Naive thymus-derived CD4-positive, alpha-beta T cell (primary cell): ENCODE measurements at regions of chr9 and their contacts with region 1.

Region 1: DNA sequence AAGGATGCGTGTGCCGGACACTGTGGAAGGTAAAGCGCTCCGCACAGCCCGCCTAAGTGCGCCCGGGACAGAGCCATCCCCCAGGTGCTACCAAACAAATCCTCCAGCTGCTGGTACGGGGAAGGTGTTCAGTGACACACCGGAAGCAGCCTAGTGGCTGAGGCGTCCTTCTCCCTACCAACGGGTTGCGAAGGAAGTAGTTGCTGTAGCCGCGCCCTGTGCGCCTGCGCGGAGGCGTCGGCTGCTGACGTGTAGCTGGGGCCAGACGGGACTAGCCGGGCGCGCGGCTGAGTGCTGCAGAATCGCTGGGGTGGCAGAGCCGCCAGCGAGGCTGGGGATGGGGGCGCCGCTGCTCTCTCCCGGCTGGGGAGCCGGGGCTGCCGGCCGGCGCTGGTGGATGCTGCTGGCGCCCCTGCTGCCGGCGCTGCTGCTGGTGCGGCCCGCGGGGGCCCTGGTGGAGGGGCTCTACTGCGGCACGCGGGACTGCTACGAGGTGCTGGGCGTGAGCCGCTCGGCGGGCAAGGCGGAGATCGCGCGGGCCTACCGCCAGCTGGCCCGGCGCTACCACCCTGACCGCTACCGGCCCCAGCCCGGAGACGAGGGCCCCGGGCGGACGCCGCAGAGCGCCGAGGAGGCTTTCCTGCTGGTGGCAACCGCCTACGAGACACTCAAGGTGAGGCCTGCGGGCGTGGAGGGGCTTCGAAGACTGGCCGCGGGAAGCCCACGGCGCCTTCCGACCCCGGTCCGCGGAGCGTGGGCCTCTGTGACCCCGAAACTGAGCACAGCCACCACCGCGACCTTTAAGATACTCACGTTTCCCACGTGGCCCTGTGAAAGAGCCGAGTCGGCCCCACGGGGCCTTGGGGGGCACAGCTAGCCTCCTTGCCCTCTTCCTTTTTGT is at the start of gene DNAJC25:
- DNase-seq: peak; percentile 94 to 98 (median 97)
- ATAC-seq: peak; percentile 97
- H3K4me3 ChIP-seq: peak within 1 kb of the TSS; percentile 82
- H3K4me3 Mint-ChIP-seq: peak within 1 kb of the TSS; percentile 81 to 99 (median 94)
- H3K27ac ChIP-seq: peak within 1 kb of the TSS; percentile 83
- H3K27ac Mint-ChIP-seq: peak within 1 kb of the TSS; percentile 78 to 95 (median 89)
- H3K4me1 ChIP-seq: peaks cover 14 to 21% of the 10 kb centered on the region in 2 donors
- H3K4me1 Mint-ChIP-seq: peaks cover 29 to 57% (median 47%) of the 10 kb centered on the region in 7 donors
- H3K27me3 ChIP-seq: no peaks in the 10 kb centered on the region
- H3K27me3 Mint-ChIP-seq: no peaks in the 10 kb centered on the region
- total RNA-seq, gene DNAJC25: 4.0 to 6.0 (median 5.2) TPM

Region 2: GRCh38 chr9:111525056-111525977 is 106.0 kb before region 1 on chr9 and contains the start of gene ZNF483:
- CTCF ChIA-PET with region 1: no interaction called
- POLR2A ChIA-PET with region 1: no interaction called
- intact Hi-C with region 1: loop called (anchors 1 kb)
- DNase-seq: peak; percentile 60 to 89 (median 75)
- ATAC-seq: peak; percentile 90
- H3K4me3 ChIP-seq: peak within 1 kb of the TSS; percentile 84
- H3K4me3 Mint-ChIP-seq: peak within 1 kb of the TSS; percentile 86 to 98 (median 92)
- H3K27ac ChIP-seq: peak within 1 kb of the TSS; percentile 86
- H3K27ac Mint-ChIP-seq: peak within 1 kb of the TSS; percentile 90 to 99 (median 96)
- H3K4me1 ChIP-seq: peaks cover 4 to 6% of the 10 kb centered on the region in 2 donors
- H3K4me1 Mint-ChIP-seq: peaks cover 16 to 31% (median 21%) of the 10 kb centered on the region in 7 donors
- H3K27me3 ChIP-seq: no peaks in the 10 kb centered on the region
- H3K27me3 Mint-ChIP-seq: peaks cover 0 to 15% (median 5%) of the 10 kb centered on the region in 5 donors
- total RNA-seq, gene ZNF483: 3.0 to 37.1 (median 16.0) TPM

Region 3: GRCh38 chr9:111691672-111692329 is 60.5 kb after region 1 on chr9:
- CTCF ChIA-PET with region 1: no interaction called
- POLR2A ChIA-PET with region 1: interaction called, 3 read pairs
- intact Hi-C with region 1: loop called (anchors 1 kb)
- DNase-seq: peak in 5 of 9 donors; percentile 8 to 34 (median 11)
- ATAC-seq: no peak
- H3K4me3 ChIP-seq: no peak overlapping the region
- H3K4me3 Mint-ChIP-seq: no peak overlapping the region
- H3K27ac ChIP-seq: no peak overlapping the region
- H3K27ac Mint-ChIP-seq: no peak overlapping the region
- H3K4me1 ChIP-seq: no peaks in the 10 kb centered on the region
- H3K4me1 Mint-ChIP-seq: peaks cover 0 to 5% (median 0%) of the 10 kb centered on the region in 7 donors
- H3K27me3 ChIP-seq: no peaks in the 10 kb centered on the region
- H3K27me3 Mint-ChIP-seq: no peaks in the 10 kb centered on the region

Region 4: GRCh38 chr9:112486221-112487007 is 855.1 kb after region 1 on chr9 and contains the start of gene KIAA1958:
- CTCF ChIA-PET with region 1: no interaction called
- POLR2A ChIA-PET with region 1: no interaction called
- intact Hi-C with region 1: loop called in 1 of 2 experiments (anchors 10 kb)
- DNase-seq: peak; percentile 51 to 88 (median 73)
- ATAC-seq: peak; percentile 88
- H3K4me3 ChIP-seq: peak within 1 kb of the TSS; percentile 69
- H3K4me3 Mint-ChIP-seq: peak within 1 kb of the TSS; percentile 95 to 100 (median 98)
- H3K27ac ChIP-seq: peak within 1 kb of the TSS; percentile 72
- H3K27ac Mint-ChIP-seq: peak within 1 kb of the TSS; percentile 93 to 98 (median 97)
- H3K4me1 ChIP-seq: peaks cover 4 to 6% of the 10 kb centered on the region in 2 donors
- H3K4me1 Mint-ChIP-seq: peaks cover 19 to 64% (median 49%) of the 10 kb centered on the region in 7 donors
- H3K27me3 ChIP-seq: no peaks in the 10 kb centered on the region
- H3K27me3 Mint-ChIP-seq: peaks cover 0 to 6% (median 0%) of the 10 kb centered on the region in 5 donors
- total RNA-seq, gene KIAA1958: 6.2 to 8.3 (median 7.0) TPM

Region 5: DNA sequence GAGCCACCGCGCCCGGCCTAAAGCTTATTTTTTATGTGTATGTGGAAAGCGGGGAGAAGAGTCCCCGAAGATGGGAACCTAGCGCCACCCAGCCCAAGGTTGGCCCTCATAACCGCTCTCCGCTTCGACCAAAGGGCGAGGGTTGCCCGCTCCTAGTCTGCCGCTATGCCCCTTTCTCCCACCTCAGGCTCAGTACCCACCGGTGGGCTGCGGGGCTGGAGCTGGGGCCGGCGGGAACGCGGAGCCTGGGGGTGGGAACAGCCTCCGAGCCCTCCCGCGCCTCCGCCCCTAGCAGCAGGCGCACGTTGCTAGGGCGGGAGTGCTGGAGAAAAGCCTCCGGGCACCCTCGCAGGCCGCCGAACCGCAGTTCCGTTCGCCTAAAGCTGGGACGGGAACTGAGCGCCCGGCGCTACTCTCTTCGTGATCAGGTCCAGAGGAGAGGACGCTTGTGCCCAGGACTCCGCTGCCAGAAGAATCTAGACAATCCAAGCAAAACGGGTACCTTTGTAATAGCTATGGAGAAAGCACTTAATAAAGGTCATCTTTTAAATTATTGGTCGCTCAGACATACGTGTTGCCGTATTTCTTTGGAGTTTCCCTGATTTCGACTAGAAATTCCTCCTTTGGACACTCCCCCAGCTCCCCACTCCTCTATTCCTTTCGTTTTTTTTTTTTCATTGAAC is 1708.8 kb after region 1 on chr9 and contains the start of gene WDR31:
- CTCF ChIA-PET with region 1: no interaction called
- POLR2A ChIA-PET with region 1: no interaction called
- intact Hi-C with region 1: loop called in 1 of 2 experiments (anchors 2 kb)
- DNase-seq: peak; percentile 52 to 85 (median 75)
- ATAC-seq: peak; percentile 98
- H3K4me3 ChIP-seq: peak within 1 kb of the TSS; percentile 86
- H3K4me3 Mint-ChIP-seq: peak within 1 kb of the TSS; percentile 72 to 91 (median 88)
- H3K27ac ChIP-seq: peak within 1 kb of the TSS; percentile 62
- H3K27ac Mint-ChIP-seq: peak within 1 kb of the TSS; percentile 2 to 85 (median 62)
- H3K4me1 ChIP-seq: peaks cover 4 to 20% of the 10 kb centered on the region in 2 donors
- H3K4me1 Mint-ChIP-seq: peaks cover 12 to 54% (median 30%) of the 10 kb centered on the region in 7 donors
- H3K27me3 ChIP-seq: no peaks in the 10 kb centered on the region
- H3K27me3 Mint-ChIP-seq: peaks cover 0 to 7% (median 0%) of the 10 kb centered on the region in 5 donors
- total RNA-seq, gene WDR31: 0.27 to 1.7 (median 1.0) TPM